ENCODE measurements at regions of chr1 and their contacts with region 1.

Region 1: GRCh38 chr1:109548321-109549267 is at the start of gene GNAI3:
- DNase-seq: peak; percentile 96
- H3K4me3 Mint-ChIP-seq: peak within 1 kb of the TSS; percentile 99
- H3K27ac Mint-ChIP-seq: peak within 1 kb of the TSS; percentile 95
- H3K4me1 Mint-ChIP-seq: peaks cover 42% of the 10 kb centered on the region
- H3K27me3 Mint-ChIP-seq: no peaks in the 10 kb centered on the region
- total RNA-seq, gene GNAI3: 8.9 and 9.4 TPM in 2 replicates

Region 2: DNA sequence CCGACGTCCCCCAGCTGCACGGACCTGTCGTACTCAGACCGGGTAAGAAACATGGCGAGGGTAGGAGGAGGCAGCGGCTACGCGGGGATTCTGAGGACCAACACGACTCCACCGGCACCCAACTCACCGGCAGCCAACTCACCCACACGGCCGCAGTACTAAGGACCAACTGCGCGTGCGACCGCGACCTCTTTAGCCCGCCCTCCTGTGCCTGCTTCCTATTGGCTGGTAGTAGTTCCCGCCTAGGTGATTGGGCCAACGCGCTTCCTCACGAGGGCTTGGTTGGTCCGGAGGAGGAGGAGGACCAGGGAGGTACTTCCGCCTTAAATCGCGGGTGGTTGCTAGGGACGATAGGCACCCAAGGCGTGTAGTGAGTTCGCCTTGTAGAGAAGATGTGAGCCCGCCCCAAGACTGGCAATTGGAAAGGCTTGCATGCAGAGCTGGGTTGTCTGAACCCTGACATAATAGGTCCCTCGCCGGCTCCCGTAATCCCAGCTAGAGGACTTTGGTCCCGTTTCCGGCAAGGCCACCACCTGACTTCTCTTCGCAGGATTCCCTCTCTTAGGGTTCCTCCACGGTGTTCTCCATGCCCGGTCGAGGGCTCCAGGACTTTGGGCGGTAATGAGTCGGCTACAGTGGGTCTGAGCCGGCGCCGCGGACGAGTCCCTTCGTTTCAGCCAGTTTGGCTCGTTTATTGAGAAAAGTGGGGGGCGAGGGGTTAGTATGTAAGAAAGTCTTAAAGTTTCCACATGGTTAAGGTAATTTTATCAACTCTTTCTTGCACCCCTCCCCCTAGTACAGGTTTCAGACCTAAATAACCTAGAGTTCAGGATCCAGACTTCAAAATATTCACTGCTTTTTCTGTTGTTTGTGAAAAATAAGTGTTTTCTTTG is 122.1 kb before region 1 on chr1 and contains the start of gene PSMA5:
- intact Hi-C with region 1: loop called (anchors 5 kb)
- DNase-seq: peak; percentile 96
- H3K4me3 Mint-ChIP-seq: peak within 1 kb of the TSS; percentile 95
- H3K27ac Mint-ChIP-seq: peak within 1 kb of the TSS; percentile 97
- H3K4me1 Mint-ChIP-seq: peaks cover 28% of the 10 kb centered on the region
- H3K27me3 Mint-ChIP-seq: no peaks in the 10 kb centered on the region
- total RNA-seq, gene PSMA5: 257 and 281 TPM in 2 replicates

Region 3: GRCh38 chr1:109628540-109629321 is 80.1 kb after region 1 on chr1:
- intact Hi-C with region 1: loop called (anchors 2 kb)
- DNase-seq: no peak
- H3K4me3 Mint-ChIP-seq: no peak overlapping the region
- H3K27ac Mint-ChIP-seq: no peak overlapping the region
- H3K4me1 Mint-ChIP-seq: peaks cover 6% of the 10 kb centered on the region
- H3K27me3 Mint-ChIP-seq: no peaks in the 10 kb centered on the region

Region 4: DNA sequence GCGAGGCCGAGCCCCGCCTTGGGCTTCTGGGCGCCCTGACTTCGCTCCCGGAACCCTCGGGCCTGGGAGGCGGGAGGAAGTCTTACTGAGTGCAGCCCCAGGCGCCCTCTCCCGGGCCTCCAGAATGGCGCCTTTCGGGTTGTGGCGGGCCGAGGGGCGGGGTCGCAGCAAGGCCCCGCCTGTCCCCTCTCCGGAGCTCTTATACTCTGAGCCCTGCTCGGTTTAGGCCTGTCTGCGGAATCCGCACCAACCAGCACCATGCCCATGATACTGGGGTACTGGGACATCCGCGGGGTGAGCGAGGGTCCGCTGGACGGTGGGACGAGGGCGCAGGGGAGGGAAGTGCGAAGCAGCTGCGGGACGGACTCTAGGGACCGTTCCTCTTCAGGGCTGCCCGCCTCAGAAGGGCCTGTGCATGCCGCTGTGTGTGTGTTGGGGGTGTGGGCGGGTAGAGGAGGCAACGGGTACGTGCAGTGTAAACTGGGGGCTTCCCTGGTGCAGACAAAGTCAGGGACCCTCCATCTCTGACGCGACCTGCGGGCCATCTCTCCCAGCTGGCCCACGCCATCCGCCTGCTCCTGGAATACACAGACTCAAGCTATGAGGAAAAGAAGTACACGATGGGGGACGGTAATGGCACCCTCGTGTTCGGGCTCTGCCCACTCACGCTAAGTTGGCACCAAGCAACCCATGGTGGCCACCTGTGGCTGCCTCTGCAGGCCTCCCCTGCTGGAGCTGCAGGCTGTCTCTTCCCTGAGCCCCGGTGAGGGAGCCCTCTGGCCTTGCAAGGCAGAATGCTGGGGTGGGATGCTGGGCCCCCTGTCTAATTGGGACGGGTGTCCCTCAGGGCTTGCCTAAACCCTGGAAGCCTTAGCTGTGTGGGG is 139.3 kb after region 1 on chr1 and contains the start of gene GSTM1:
- intact Hi-C with region 1: loop called (anchors 2 kb)
- DNase-seq: peak; percentile 85
- H3K4me3 Mint-ChIP-seq: peak within 1 kb of the TSS; percentile 86
- H3K27ac Mint-ChIP-seq: peak within 1 kb of the TSS; percentile 94
- H3K4me1 Mint-ChIP-seq: peaks cover 11% of the 10 kb centered on the region
- H3K27me3 Mint-ChIP-seq: no peaks in the 10 kb centered on the region
- total RNA-seq, gene GSTM1: 112 and 113 TPM in 2 replicates

Region 5: DNA sequence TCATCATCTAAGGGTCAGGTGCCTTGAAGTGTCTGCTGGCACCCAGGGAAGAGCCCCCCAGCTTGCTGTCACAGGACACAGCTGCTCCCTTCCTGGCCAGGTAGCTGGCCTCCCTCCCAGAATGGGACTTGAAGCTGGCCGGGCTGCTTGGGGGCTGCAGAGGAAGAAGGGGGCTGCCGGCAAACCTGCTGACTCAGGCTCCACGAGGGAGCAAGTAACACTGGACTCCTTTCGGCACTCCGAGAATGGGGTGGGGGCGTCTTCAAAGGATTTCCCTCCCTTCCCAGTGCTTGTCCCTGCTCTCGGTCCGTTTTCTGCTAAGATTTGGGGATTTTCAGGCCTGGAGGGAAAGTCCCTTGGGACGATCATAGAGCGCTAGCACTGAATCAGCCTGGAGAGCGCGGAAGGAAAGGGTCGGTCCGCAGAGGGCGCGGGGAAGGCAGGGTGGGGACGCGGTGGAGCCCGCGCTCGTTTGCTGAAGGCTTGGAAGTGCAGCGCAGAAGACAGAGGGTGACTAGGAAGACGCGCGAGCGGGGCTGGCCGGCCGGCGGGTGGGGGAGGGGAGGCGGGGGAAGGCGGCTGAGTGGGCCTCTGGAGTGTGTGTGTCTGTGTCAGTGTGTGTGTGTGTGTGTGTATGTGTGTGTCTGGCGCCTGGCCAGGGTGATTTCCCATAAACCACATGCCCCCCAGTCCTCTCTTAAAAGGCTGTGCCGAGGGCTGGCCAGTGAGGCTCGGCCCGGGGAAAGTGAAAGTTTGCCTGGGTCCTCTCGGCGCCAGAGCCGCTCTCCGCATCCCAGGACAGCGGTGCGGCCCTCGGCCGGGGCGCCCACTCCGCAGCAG is 361.7 kb after region 1 on chr1 and contains the start of gene CSF1:
- intact Hi-C with region 1: loop called (anchors 10 kb)
- DNase-seq: peak; percentile 65
- H3K4me3 Mint-ChIP-seq: peak within 1 kb of the TSS; percentile 92
- H3K27ac Mint-ChIP-seq: peak within 1 kb of the TSS; percentile 96
- H3K4me1 Mint-ChIP-seq: peaks cover 75% of the 10 kb centered on the region
- H3K27me3 Mint-ChIP-seq: no peaks in the 10 kb centered on the region
- total RNA-seq, gene CSF1: 251 and 252 TPM in 2 replicates